ENCODE measurements at regions of chr15 and their contacts with region 1.

Region 1: GRCh38 chr15:95541301-95541700 is 789.2 kb upstream of the NR2F2 start:
- DNase-seq: no peak
- H3K4me3 ChIP-seq: no peak overlapping the region
- H3K27ac ChIP-seq: no peak overlapping the region
- H3K4me1 ChIP-seq: no peaks in the 10 kb centered on the region
- H3K27me3 ChIP-seq: no peaks in the 10 kb centered on the region
- CTCF ChIP-seq: no peak

Region 2: DNA sequence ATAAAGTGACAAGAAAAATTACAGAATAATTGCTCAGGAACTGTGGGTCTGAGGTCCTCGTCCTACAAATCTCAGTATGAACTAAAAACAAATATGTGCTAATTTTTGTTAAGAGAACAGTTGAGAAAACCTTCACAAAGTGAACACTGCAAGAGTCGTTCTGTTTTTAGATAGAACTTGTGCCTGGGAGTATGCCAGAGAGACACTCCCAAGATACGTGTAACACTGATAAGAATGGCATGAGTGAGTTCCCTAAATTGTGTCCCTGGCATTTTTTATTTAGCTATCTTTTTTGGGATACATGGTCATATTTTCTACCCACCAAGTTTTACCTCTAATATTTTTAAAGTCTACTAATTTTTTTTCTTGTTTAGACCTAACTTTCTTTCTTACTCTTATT is 70.8 kb before region 1 on chr15:
- CTCF ChIA-PET with region 1: no interaction called
- POLR2A ChIA-PET with region 1: interaction called, 13 read pairs
- intact Hi-C with region 1: no loop called
- DNase-seq: no peak
- H3K4me3 ChIP-seq: no peak overlapping the region
- H3K27ac ChIP-seq: no peak overlapping the region
- H3K4me1 ChIP-seq: no peaks in the 10 kb centered on the region
- H3K27me3 ChIP-seq: no peaks in the 10 kb centered on the region
- CTCF ChIP-seq: no peak

Measured in A673 (cell line).